Activated naive CD4-positive, alpha-beta T cell treated with anti-CD3 and anti-CD28 coated beads for 36 hours (primary cell): ENCODE measurements at regions of chr3 and their contacts with region 1.

Region 1: GRCh38 chr3:151468284-151468917 is 7.5 kb upstream of the IGSF10 start:
- DNase-seq: peak; percentile 40
- H3K4me3 Mint-ChIP-seq: no peak overlapping the region
- H3K27ac Mint-ChIP-seq: no peak overlapping the region
- H3K4me1 Mint-ChIP-seq: no peaks in the 10 kb centered on the region
- H3K27me3 Mint-ChIP-seq: peaks cover 4% of the 10 kb centered on the region

Region 2: GRCh38 chr3:151483488-151483887 is 15.1 kb after region 1 on chr3:
- CTCF ChIA-PET with region 1: interaction called, 13 read pairs
- intact Hi-C with region 1: no loop called
- DNase-seq: no peak
- H3K4me3 Mint-ChIP-seq: no peak overlapping the region
- H3K27ac Mint-ChIP-seq: no peak overlapping the region
- H3K4me1 Mint-ChIP-seq: no peaks in the 10 kb centered on the region
- H3K27me3 Mint-ChIP-seq: peaks cover 12% of the 10 kb centered on the region